ENCODE measurements at regions of chr6 and their contacts with region 1.

Region 1: DNA sequence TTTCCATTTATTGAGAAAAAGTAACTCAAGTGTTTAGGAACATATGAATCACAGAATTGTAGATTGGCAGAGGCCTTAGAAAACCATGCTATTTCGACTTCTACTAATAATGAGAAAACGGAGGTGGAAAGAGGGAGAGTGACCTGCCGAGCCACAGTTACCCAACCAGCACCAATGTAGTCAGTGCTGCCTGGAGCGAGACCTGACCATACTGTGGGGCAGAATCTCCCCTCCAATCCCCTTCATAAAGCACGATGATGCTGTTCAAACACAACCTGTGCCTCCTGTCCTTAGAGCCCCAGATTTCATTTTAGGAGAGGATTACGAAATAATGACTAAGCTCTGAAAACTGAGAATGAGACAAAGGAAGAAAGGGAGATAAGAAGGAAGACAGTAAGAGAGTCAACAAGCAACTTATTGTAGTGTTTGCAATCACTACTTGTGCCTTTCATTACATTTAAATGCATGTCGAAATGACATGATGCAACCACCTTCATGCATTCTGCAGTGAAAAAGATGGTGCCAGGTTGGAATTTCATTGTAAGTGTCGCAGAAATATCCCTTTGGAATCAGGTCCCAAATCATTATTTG is 70.6 kb downstream of the ATXN1 start:
- DNase-seq: peak; percentile 74
- H3K4me3 Mint-ChIP-seq: peak overlapping the region; percentile 81
- H3K27ac Mint-ChIP-seq: peak overlapping the region; percentile 99
- H3K4me1 Mint-ChIP-seq: peaks cover 73% of the 10 kb centered on the region
- H3K27me3 Mint-ChIP-seq: no peaks in the 10 kb centered on the region

Region 2: DNA sequence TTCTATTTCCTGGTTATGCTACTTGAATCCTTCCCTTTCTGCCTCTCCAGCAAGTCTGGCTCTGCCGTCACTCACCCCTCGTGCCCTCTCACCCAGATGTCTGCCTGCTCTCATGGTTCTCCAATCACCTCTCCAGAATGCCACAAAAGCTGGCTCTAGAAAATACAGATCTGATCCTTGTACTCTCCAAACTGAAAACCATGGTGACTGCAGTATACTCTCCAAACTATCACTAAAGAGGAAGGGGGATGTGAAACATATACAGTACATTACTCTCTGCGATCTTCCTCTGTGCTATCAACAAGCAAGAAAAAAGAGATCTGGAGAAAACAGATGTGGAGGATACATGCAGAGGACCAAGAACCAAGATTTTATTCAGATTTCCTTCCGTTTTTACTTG is 20.5 kb before region 1 on chr6:
- intact Hi-C with region 1: loop called (anchors 1 kb)
- DNase-seq: no peak
- H3K4me3 Mint-ChIP-seq: peak overlapping the region; percentile 70
- H3K27ac Mint-ChIP-seq: peak overlapping the region; percentile 97
- H3K4me1 Mint-ChIP-seq: peaks cover 64% of the 10 kb centered on the region
- H3K27me3 Mint-ChIP-seq: no peaks in the 10 kb centered on the region

Region 3: DNA sequence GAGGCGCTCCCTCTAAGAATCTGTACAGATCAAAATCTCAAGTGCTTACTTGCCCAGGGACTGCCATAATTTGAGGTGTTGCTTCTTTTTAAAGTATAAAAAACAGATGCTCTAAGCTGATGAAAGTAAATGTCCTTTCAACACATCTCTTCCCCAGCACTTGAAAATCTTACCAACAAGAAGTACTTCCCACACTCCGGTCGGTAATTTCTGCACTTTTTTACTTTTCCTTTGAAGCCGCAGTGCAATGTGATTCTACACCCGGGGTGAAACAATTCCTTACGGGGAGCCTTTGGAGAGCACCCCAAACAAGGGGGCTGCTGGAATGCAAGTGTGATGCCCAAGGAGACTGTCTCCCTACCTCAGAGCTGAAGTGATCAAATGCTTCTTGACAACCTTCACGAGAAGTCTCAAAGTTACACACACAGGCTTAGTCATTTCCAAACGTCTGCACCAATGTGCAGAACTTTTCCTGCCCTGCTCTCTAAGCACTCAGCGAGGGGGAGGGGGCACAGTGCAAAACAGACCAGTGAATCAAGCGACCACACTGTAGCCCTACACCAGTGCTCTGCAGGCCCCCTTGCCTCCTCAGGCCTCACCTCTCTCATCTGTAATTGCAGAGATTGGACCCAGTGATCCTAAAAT is 13.8 kb after region 1 on chr6:
- intact Hi-C with region 1: loop called (anchors 1 kb)
- DNase-seq: peak; percentile 85
- H3K4me3 Mint-ChIP-seq: peak overlapping the region; percentile 86
- H3K27ac Mint-ChIP-seq: peak overlapping the region; percentile 94
- H3K4me1 Mint-ChIP-seq: peaks cover 63% of the 10 kb centered on the region
- H3K27me3 Mint-ChIP-seq: no peaks in the 10 kb centered on the region

Region 4: DNA sequence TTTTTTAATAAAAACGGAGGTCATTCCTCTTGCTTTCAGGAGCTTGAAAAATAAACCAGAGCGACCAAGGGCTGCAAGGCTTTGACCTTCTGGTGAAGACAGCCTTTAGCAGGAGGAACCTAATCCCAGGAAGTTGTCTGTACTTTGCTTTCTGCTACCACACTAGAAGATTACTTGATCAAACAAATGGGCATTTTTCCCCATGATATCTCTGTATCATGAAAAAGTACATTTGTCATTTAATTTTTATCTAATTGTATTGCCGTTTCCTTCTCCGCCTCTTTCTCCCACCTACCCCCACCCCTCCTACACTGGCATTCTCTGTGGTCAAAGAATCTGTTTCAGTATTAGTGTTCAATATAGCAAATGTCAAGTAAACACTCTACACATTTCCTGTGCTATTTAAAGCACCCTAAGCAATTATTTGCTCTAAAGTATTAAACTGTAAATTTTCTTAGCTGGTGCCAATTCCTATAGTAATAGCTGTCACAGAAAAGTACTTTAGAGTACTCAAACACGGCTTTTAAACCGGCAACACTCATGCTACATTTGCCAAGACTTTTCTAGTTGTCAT is 40.9 kb after region 1 on chr6:
- intact Hi-C with region 1: loop called (anchors 1 kb)
- DNase-seq: peak; percentile 80
- H3K4me3 Mint-ChIP-seq: peak overlapping the region; percentile 69
- H3K27ac Mint-ChIP-seq: peak overlapping the region; percentile 76
- H3K4me1 Mint-ChIP-seq: peaks cover 62% of the 10 kb centered on the region
- H3K27me3 Mint-ChIP-seq: no peaks in the 10 kb centered on the region